Tibial artery (tissue), 4 donors: ENCODE measurements at regions of chr15 and their contacts with region 1.

Region 1: GRCh38 chr15:54109014-54109413 is 130.8 kb downstream of the UNC13C start:
- DNase-seq: no peak
- H3K4me3 ChIP-seq: no peak overlapping the region
- H3K27ac ChIP-seq: peak overlapping the region in 1 of 2 donors; percentile 33
- H3K4me1 ChIP-seq: peaks cover 0 to 47% (median 5%) of the 10 kb centered on the region in 4 donors
- H3K27me3 ChIP-seq: no peaks in the 10 kb centered on the region
- CTCF ChIP-seq: no peak

Region 2: GRCh38 chr15:52179278-52180195 is 1929.5 kb before region 1 on chr15:
- intact Hi-C with region 1: loop called (anchors 5 kb)
- DNase-seq: peak; percentile 82 to 90
- H3K4me3 ChIP-seq: peak overlapping the region; percentile 75 to 85
- H3K27ac ChIP-seq: peak overlapping the region; percentile 84 to 90
- H3K4me1 ChIP-seq: peaks cover 0 to 10% (median 7%) of the 10 kb centered on the region in 4 donors
- H3K27me3 ChIP-seq: no peaks in the 10 kb centered on the region
- CTCF ChIP-seq: peak in 1 of 2 experiments; percentile 15

Region 3: DNA sequence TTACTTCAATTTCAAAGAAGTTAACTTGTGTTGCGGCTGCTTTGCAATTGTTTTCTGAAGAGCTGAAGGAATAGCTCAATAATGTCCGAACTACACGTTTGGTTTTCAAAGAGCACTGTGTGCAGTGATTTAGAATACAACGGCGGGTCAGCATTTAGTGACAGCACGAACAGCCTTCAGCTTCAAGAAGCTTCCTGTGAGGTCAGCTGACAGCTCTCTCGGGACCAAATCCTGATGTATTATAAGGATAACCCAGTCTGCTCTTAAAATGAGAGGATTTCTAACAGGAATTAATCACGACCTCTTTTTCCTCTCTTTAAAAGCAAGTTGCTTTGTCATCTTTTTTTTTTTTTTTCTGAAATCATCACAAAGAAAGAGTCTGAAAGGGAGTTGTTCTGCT is 228.7 kb before region 1 on chr15:
- intact Hi-C with region 1: no loop called
- DNase-seq: no peak
- H3K4me3 ChIP-seq: no peak overlapping the region
- H3K27ac ChIP-seq: no peak overlapping the region
- H3K4me1 ChIP-seq: peaks cover 0 to 11% (median 0%) of the 10 kb centered on the region in 4 donors
- H3K27me3 ChIP-seq: no peaks in the 10 kb centered on the region
- CTCF ChIP-seq: no peak